Right ventricle myocardium inferior (tissue), 1 donor: ENCODE measurements at regions of chr6 and their contacts with region 1.

Region 1: DNA sequence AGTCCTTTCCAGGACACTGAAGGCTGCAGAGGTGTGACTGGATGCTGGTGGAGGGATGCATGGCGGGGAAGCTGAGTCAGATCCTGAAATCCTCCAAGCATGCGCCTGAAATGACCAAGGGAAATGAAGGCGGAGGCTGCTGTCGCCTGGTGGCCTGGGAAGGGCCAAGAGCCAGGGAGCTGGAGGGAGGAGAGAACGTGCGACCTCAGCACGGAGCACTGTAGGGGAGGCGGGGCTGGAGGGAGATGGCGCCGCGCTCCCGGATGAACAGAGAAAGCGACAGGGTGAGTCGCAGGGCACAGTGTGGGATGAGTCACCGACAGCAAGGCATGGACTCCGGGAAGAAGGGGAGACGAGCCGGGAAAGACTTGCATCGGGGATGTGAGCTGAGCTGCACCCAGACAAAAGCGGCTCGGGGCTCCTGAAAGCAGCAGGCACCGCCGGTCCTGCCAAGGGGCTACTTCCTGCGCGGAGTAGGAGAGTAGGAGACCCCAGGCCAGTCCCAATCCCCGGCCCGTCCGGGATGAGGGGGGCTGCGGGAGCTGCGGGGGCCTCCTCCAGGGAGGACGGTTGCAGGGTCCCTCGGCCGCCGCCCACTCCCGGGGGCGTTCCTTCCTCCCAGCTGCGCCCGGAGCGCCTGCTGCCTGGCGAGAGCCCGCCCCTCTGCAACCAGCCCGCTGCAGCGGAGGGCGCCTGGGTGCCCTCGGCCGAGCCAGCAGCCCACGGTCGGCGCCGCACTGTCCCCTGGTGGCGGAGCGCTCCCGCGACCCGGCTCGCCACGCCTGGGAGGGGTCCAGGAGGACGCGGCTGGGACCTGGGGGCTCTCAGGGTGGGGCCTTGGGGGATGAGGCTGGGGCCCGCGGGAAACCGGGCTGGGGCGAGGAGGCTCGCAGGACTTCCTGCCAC is 11.0 kb upstream of the NQO2 start:
- DNase-seq: peak; percentile 95
- ATAC-seq: peak; percentile 88

Region 2: GRCh38 chr6:2848851-2849250 is 139.8 kb before region 1 on chr6:
- intact Hi-C with region 1: loop called (anchors 2 kb)
- DNase-seq: no peak
- ATAC-seq: no peak

Region 3: GRCh38 chr6:2952557-2953095 is 36.1 kb before region 1 on chr6:
- intact Hi-C with region 1: loop called (anchors 1 kb)
- DNase-seq: peak; percentile 89
- ATAC-seq: peak; percentile 62

Region 4: GRCh38 chr6:3258720-3259490 is 270.2 kb after region 1 on chr6 and contains the start of gene PSMG4:
- intact Hi-C with region 1: loop called (anchors 10 kb)
- DNase-seq: peak; percentile 98
- ATAC-seq: peak; percentile 99
- total RNA-seq, gene PSMG4: 9.1 TPM